Endothelial cell of umbilical vein (primary cell): ENCODE measurements at regions of chr16 and their contacts with region 1.

Region 1: GRCh38 chr16:69123910-69124309 is 8.5 kb downstream of the CHTF8 start:
- DNase-seq: peak; percentile 68
- H3K4me3 ChIP-seq: no peak overlapping the region
- H3K27ac ChIP-seq: no peak overlapping the region
- H3K4me1 ChIP-seq: peaks cover 3% of the 10 kb centered on the region
- H3K27me3 ChIP-seq: no peaks in the 10 kb centered on the region
- CTCF ChIP-seq: peak; percentile 49
- POLR2A ChIP-seq: peak; percentile 26

Region 2: GRCh38 chr16:68590201-68590994 is 533.5 kb before region 1 on chr16:
- CTCF ChIA-PET with region 1: interaction called, 29 read pairs
- POLR2A ChIA-PET with region 1: no interaction called
- dilution Hi-C with region 1: no loop called
- intact Hi-C with region 1: no loop called
- DNase-seq: peak; percentile 38
- H3K4me3 ChIP-seq: no peak overlapping the region
- H3K27ac ChIP-seq: no peak overlapping the region
- H3K4me1 ChIP-seq: no peaks in the 10 kb centered on the region
- H3K27me3 ChIP-seq: no peaks in the 10 kb centered on the region
- CTCF ChIP-seq: peak; percentile 58 to 79
- POLR2A ChIP-seq: no peak

Region 3: GRCh38 chr16:68848786-68849185 is 275.1 kb before region 1 on chr16:
- CTCF ChIA-PET with region 1: interaction called, 114 read pairs
- POLR2A ChIA-PET with region 1: no interaction called
- dilution Hi-C with region 1: no loop called
- intact Hi-C with region 1: loop called (anchors 1 kb)
- DNase-seq: no peak
- H3K4me3 ChIP-seq: no peak overlapping the region
- H3K27ac ChIP-seq: no peak overlapping the region
- H3K4me1 ChIP-seq: peaks cover 7% of the 10 kb centered on the region
- H3K27me3 ChIP-seq: no peaks in the 10 kb centered on the region
- CTCF ChIP-seq: no peak
- POLR2A ChIP-seq: no peak

Region 4: DNA sequence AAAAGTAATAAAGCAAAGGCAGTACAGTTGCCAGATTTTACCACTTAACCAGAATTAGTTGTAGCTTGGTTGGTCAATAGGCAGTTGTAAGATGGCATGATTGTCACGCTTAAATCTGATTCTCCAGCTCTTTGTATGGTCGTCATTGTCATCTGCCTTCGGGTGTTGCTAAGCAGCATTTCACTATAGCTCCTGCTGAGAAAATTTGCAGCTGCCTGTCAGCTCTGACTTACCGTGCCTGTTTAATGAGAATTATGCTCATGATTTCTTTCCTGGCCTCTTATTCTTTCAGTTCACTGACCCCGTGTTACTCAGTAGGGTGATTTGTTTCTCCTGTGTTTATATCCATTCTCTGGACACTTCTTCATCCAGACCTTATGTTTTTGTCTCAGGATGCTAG is 213.9 kb before region 1 on chr16:
- CTCF ChIA-PET with region 1: interaction called, 107 read pairs
- POLR2A ChIA-PET with region 1: no interaction called
- dilution Hi-C with region 1: no loop called
- intact Hi-C with region 1: no loop called
- DNase-seq: no peak
- H3K4me3 ChIP-seq: no peak overlapping the region
- H3K27ac ChIP-seq: no peak overlapping the region
- H3K4me1 ChIP-seq: no peaks in the 10 kb centered on the region
- H3K27me3 ChIP-seq: no peaks in the 10 kb centered on the region
- CTCF ChIP-seq: no peak
- POLR2A ChIP-seq: no peak

Region 5: GRCh38 chr16:68995011-68995504 is 128.9 kb before region 1 on chr16:
- CTCF ChIA-PET with region 1: interaction called, 17 read pairs
- POLR2A ChIA-PET with region 1: no interaction called
- dilution Hi-C with region 1: no loop called
- intact Hi-C with region 1: loop called (anchors 1 kb)
- DNase-seq: peak; percentile 53
- H3K4me3 ChIP-seq: no peak overlapping the region
- H3K27ac ChIP-seq: peak overlapping the region; percentile 69
- H3K4me1 ChIP-seq: peaks cover 40% of the 10 kb centered on the region
- H3K27me3 ChIP-seq: no peaks in the 10 kb centered on the region
- CTCF ChIP-seq: peak; percentile 34 to 48
- POLR2A ChIP-seq: no peak